Activated CD4-positive, alpha-beta T cell treated with anti-CD3 and anti-CD28 coated beads, Interleukin-2, amount 10 ng/mL, durations not matched to agents 7 days and 5 days (primary cell): ENCODE measurements at regions of chr6 and their contacts with region 1.

Region 1: DNA sequence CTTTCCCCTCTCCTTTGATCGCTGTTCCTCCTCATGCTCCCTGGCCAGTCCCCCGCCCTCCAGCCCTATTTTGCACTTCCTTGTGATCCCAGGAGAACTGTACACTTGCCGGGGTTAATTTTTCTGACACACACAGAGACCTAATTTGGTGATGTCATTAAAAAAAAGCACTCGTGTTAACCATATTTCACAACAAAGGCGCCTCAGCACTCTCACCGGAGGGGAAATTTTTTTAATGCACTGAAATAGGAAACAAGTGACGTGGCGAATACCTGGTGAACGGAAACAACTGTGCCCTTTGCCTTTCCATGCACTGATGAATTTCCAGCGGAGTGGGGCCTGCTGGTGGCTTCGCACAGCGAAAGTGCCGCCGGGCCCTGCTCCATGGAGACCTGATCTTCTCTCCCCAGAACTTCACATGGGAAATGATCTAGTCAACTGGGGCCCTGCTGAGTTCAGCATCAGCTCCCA is 53.9 kb upstream of the TAGAP start:
- DNase-seq: peak; percentile 67
- H3K4me3 Mint-ChIP-seq: peak overlapping the region; percentile 28
- H3K27ac Mint-ChIP-seq: peak overlapping the region; percentile 90
- H3K4me1 Mint-ChIP-seq: peaks cover 65% of the 10 kb centered on the region
- H3K27me3 Mint-ChIP-seq: no peaks in the 10 kb centered on the region

Region 2: GRCh38 chr6:159062564-159062945 is 36.1 kb before region 1 on chr6:
- CTCF ChIA-PET with region 1: interaction called, 10 read pairs
- POLR2A ChIA-PET with region 1: interaction called, 3 read pairs
- DNase-seq: peak; percentile 82
- H3K4me3 Mint-ChIP-seq: peak overlapping the region; percentile 41
- H3K27ac Mint-ChIP-seq: peak overlapping the region; percentile 98
- H3K4me1 Mint-ChIP-seq: peaks cover 78% of the 10 kb centered on the region
- H3K27me3 Mint-ChIP-seq: no peaks in the 10 kb centered on the region

Region 3: GRCh38 chr6:159080217-159080976 is 18.3 kb before region 1 on chr6:
- CTCF ChIA-PET with region 1: interaction called, 11 read pairs
- POLR2A ChIA-PET with region 1: no interaction called
- DNase-seq: no peak
- H3K4me3 Mint-ChIP-seq: no peak overlapping the region
- H3K27ac Mint-ChIP-seq: no peak overlapping the region
- H3K4me1 Mint-ChIP-seq: peaks cover 12% of the 10 kb centered on the region
- H3K27me3 Mint-ChIP-seq: peaks cover 6% of the 10 kb centered on the region

Region 4: DNA sequence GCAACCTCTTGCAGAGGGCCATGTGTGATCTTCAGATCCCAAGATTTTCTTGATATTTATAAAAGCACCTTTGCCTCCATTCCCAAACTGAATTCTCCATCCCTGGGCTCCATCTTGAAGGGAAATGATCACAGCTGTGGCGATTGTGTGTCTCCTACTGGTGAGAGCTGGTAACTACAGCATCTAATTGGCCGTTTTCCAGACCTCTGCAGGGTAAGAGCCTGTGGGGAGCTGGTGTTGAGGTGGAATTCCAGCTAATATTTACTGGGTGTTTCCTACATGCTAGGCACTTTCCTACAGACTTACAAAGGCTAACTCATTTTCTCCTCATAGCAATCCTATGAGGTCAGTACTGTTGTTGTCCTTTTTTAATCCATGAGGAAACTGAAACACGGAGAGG is 11.3 kb after region 1 on chr6:
- CTCF ChIA-PET with region 1: interaction called, 24 read pairs
- POLR2A ChIA-PET with region 1: no interaction called
- DNase-seq: peak; percentile 53
- H3K4me3 Mint-ChIP-seq: no peak overlapping the region
- H3K27ac Mint-ChIP-seq: no peak overlapping the region
- H3K4me1 Mint-ChIP-seq: peaks cover 61% of the 10 kb centered on the region
- H3K27me3 Mint-ChIP-seq: no peaks in the 10 kb centered on the region